Aorta (tissue), 5 donors: ENCODE measurements at regions of chr6 and their contacts with region 1.

Region 1: GRCh38 chr6:149316798-149317655 is 485 bp upstream of the TAB2 start:
- DNase-seq: peak; percentile 94 to 97
- ATAC-seq: peak; percentile 95
- H3K4me3 ChIP-seq: peak overlapping the region; percentile 63 to 100
- H3K27ac ChIP-seq: peak overlapping the region; percentile 82 to 90
- H3K4me1 ChIP-seq: peaks cover 0 to 2% of the 10 kb centered on the region in 2 donors
- H3K27me3 ChIP-seq: peaks cover 0 to 1% of the 10 kb centered on the region in 2 donors

Region 2: GRCh38 chr6:149211046-149211571 is 105.9 kb before region 1 on chr6:
- intact Hi-C with region 1: no loop called
- DNase-seq: no peak
- ATAC-seq: no peak
- H3K4me3 ChIP-seq: no peak overlapping the region
- H3K27ac ChIP-seq: no peak overlapping the region
- H3K4me1 ChIP-seq: no peaks in the 10 kb centered on the region
- H3K27me3 ChIP-seq: no peaks in the 10 kb centered on the region

Region 3: DNA sequence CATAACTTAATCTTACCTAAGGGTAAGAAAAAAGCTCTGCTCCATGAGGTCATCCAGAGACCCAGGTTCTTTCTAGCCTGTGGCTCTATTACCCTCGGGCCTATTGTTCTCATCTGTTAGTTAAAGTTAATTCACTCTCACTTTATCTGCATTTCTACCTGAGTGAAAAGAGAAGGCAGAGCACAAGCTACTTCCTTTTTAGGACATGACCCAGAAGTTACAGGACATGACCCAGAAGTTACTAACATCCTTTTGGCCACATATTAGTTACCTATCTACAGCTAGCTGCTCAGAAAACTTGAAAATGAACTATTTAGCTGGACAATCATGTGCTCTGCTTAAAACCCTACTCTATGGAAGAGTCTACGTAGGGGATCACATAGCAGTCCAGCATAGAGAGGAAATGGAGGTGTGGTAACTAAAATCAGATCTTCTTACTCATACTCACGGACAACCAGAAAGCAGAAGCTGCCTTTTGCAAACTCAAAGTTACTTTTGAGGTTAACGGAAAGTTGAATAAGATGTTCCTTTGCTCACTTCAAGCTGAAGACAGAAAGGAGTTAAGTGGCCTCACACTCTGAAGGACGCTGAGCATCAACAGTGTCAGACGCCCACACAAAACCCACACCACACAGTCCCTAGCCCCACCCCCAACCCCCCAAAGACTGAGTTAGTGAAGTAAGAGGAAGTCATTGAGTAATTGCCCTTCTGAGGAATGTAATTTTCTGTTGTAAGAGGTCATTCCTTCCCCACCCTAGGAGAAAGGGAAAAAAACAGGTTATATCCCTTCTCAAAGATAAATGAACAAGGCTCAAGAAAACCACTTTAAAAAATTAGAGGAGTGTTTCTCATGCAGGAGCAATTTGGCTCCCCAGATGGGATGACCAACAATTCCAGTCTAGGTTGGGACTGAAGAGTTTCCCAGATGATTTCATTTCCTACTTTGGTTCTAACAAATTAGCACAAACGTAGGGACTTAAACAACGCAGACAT is 45.4 kb before region 1 on chr6:
- intact Hi-C with region 1: no loop called
- DNase-seq: no peak
- ATAC-seq: peak; percentile 22
- H3K4me3 ChIP-seq: no peak overlapping the region
- H3K27ac ChIP-seq: no peak overlapping the region
- H3K4me1 ChIP-seq: no peaks in the 10 kb centered on the region
- H3K27me3 ChIP-seq: peaks cover 0 to 2% of the 10 kb centered on the region in 2 donors

Region 4: DNA sequence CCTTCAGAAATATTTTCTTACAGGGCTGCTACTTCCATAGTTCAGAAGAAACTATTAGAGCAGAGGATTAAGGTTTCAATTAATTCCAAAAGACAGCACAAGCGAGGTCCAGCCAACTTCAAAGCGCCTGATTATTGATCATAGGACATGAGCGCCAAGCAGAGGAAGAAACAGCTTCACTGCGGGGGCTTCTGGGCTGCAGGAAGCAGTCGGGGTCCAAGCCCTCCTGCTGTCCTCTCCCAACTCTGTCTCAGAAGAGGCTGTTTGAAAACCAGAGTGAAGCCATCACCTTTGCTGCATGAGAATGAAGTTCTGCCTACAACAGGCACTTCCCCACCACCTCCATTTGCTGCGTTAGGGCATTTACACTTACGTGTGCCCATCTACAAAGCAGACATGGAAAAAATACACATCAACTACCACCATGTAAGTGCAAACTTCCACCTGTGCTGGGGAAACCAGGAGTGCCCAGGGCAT is 107.0 kb after region 1 on chr6:
- intact Hi-C with region 1: loop called in 1 of 2 experiments (anchors 5 kb)
- DNase-seq: no peak
- ATAC-seq: no peak
- H3K4me3 ChIP-seq: no peak overlapping the region
- H3K27ac ChIP-seq: no peak overlapping the region
- H3K4me1 ChIP-seq: no peaks in the 10 kb centered on the region
- H3K27me3 ChIP-seq: no peaks in the 10 kb centered on the region